ENCODE measurements at regions of chr1 and their contacts with region 1.

Region 1: GRCh38 chr1:44012941-44013609 is 18.2 kb downstream of the SLC6A9 start:
- DNase-seq: peak in 2 of 10 donors; percentile 35 to 59
- H3K4me3 ChIP-seq: peak overlapping the region in 4 of 59 donors; percentile 9 to 66 (median 11)
- H3K27ac ChIP-seq: peak overlapping the region; percentile 65 to 98 (median 94)
- H3K27me3 ChIP-seq: no peaks in the 10 kb centered on the region
- CTCF ChIP-seq: no peak

Region 2: GRCh38 chr1:43858328-43858731 is 154.7 kb before region 1 on chr1:
- intact Hi-C with region 1: no loop called
- DNase-seq: peak in 9 of 10 donors; percentile 22 to 86 (median 72)
- H3K4me3 ChIP-seq: no peak overlapping the region
- H3K27ac ChIP-seq: peak overlapping the region in 33 of 59 donors; percentile 2 to 77 (median 48)
- H3K27me3 ChIP-seq: no peaks in the 10 kb centered on the region
- CTCF ChIP-seq: no peak

Region 3: GRCh38 chr1:44049839-44050238 is 36.8 kb after region 1 on chr1:
- intact Hi-C with region 1: loop called in 1 of 2 experiments (anchors 5 kb)
- DNase-seq: no peak
- H3K4me3 ChIP-seq: no peak overlapping the region
- H3K27ac ChIP-seq: no peak overlapping the region
- H3K27me3 ChIP-seq: no peaks in the 10 kb centered on the region
- CTCF ChIP-seq: no peak

Region 4: DNA sequence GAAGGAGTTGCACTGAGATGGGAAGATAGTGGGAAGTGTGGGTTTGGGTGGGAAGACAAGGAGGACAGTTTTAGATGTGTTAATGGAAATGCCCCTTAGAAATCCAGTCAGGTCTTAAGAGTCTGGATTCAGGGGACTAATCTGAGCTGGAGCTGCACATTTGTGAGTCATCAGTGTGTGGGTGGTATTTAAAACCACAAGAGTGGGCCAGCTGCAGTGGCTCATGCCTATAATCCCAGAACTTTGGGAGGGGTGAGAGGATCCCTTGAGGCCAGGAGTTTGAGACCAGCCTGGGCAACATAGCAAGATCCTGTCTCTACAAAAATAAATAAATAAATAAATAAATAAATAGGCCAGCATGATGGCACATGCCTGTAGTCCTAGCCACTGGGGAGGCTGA is 59.1 kb after region 1 on chr1:
- intact Hi-C with region 1: no loop called
- DNase-seq: peak in 4 of 10 donors; percentile 7 to 64 (median 50)
- H3K4me3 ChIP-seq: no peak overlapping the region
- H3K27ac ChIP-seq: no peak overlapping the region
- H3K27me3 ChIP-seq: no peaks in the 10 kb centered on the region
- CTCF ChIP-seq: no peak